ENCODE measurements at regions of chr11 and their contacts with region 1.

Region 1: DNA sequence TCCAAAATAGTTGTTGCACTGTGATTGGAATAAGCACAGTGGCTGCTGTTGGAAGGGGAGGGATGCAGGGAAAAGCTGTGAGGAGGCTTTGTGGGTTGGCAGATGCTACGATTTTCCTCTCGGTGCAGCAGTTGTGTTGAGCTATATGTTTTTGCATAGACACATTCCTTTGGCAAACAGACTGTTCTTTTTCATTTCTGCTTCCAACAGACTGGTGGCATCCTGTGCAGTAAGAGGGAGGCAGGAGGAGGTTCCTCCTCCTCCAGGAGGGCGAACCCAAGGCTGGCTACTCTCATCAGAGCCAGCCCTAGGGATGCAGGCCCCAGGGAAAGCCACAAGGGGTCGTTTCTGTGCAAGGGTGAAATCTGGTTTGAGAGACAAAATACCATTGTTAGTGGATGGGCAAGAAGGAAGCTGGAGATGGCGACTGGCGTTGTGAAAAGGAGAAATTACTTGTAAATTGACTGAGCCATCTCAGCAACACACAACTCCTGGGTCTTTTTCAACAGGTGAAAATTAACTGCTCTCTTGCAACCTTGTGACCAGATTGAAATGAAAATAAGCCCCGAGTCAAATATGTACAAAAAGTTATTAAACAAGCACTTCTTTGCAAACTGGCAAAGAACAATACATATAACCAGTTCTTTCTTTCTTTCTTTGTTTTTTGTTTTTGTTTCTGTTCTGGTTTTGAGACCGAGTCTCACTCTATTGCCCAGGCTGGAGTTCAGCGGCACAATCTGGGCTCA is 26.5 kb upstream of the UBASH3B start:
- DNase-seq: peak; percentile 40 to 81 (median 64)
- ATAC-seq: peak; percentile 80
- H3K4me3 ChIP-seq: no peak overlapping the region
- H3K4me3 Mint-ChIP-seq: no peak overlapping the region
- H3K27ac ChIP-seq: no peak overlapping the region
- H3K27ac Mint-ChIP-seq: no peak overlapping the region
- H3K4me1 ChIP-seq: no peaks in the 10 kb centered on the region
- H3K4me1 Mint-ChIP-seq: peaks cover 14% of the 10 kb centered on the region
- H3K27me3 ChIP-seq: no peaks in the 10 kb centered on the region
- H3K27me3 Mint-ChIP-seq: no peaks in the 10 kb centered on the region
- CTCF ChIP-seq: peak; percentile 65

Region 2: GRCh38 chr11:122439911-122440810 is 188.8 kb before region 1 on chr11:
- CTCF ChIA-PET with region 1: no interaction called
- POLR2A ChIA-PET with region 1: no interaction called
- intact Hi-C with region 1: no loop called
- DNase-seq: no peak
- ATAC-seq: no peak
- H3K4me3 ChIP-seq: no peak overlapping the region
- H3K4me3 Mint-ChIP-seq: no peak overlapping the region
- H3K27ac ChIP-seq: no peak overlapping the region
- H3K27ac Mint-ChIP-seq: no peak overlapping the region
- H3K4me1 ChIP-seq: no peaks in the 10 kb centered on the region
- H3K4me1 Mint-ChIP-seq: peaks cover 10% of the 10 kb centered on the region
- H3K27me3 ChIP-seq: peaks cover 13 to 25% of the 10 kb centered on the region in 2 experiments
- H3K27me3 Mint-ChIP-seq: peaks cover 16% of the 10 kb centered on the region
- CTCF ChIP-seq: no peak

Region 3: DNA sequence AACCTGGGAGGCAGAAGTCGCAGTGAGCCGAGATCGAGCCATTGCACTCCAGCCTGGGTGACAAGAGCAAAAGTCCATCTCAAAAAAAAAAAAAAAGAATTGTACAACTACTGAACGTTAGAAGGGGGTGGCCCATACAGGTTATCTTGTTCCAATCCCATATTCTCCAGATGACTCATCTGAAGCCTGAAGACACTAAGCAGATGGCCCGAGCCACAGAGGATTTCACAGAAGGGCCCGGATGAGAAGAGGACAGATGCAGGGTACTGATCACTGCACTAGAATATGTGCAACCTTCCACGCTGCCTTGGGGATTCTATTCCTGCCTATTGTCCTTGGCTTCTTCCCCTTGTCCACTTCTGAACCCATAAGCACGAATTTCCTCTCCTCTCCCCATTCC is 44.3 kb before region 1 on chr11:
- CTCF ChIA-PET with region 1: interaction called, 3 read pairs
- POLR2A ChIA-PET with region 1: interaction called, 3 read pairs
- intact Hi-C with region 1: loop called in 1 of 2 experiments (anchors 5 kb)
- DNase-seq: no peak
- ATAC-seq: no peak
- H3K4me3 ChIP-seq: no peak overlapping the region
- H3K4me3 Mint-ChIP-seq: no peak overlapping the region
- H3K27ac ChIP-seq: no peak overlapping the region
- H3K27ac Mint-ChIP-seq: no peak overlapping the region
- H3K4me1 ChIP-seq: peaks cover 8% of the 10 kb centered on the region
- H3K4me1 Mint-ChIP-seq: peaks cover 7% of the 10 kb centered on the region
- H3K27me3 ChIP-seq: peaks cover 4 to 6% of the 10 kb centered on the region in 2 experiments
- H3K27me3 Mint-ChIP-seq: no peaks in the 10 kb centered on the region
- CTCF ChIP-seq: no peak

Region 4: DNA sequence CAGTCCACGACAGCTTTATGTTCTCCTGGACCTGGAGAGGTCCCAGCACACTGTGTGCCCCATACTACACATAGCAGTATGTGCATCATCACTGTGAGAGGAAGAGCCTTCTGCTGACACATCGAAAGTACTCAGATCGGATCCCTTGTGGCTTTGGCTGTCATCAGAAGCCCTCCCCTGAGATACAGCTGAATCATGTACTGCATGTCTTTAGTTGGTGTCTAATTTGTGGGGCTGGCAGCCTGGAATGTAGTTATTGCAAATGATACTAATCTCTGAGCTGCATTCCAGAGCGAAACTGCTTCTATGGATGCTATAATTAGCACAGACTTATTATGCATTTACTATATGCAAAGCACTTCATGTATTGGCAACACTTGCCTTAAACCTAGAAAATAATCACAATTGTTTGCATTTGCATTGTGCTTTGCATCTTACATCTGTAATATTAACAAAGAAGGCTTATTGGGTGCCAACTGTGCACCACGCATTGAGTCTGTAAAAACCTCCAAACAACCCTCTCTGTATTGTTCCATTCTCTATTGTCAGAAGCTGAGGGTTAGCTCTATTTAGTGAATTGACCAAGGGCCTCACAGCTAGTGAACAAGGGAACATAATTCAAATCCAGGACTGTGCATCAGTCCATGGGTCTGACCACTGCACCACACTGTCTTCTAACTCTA is 120.2 kb after region 1 on chr11:
- CTCF ChIA-PET with region 1: interaction called, 12 read pairs
- POLR2A ChIA-PET with region 1: no interaction called
- intact Hi-C with region 1: loop called (anchors 1 kb)
- DNase-seq: peak in 13 of 14 experiments; percentile 11 to 80 (median 37)
- ATAC-seq: peak; percentile 42
- H3K4me3 ChIP-seq: no peak overlapping the region
- H3K4me3 Mint-ChIP-seq: no peak overlapping the region
- H3K27ac ChIP-seq: no peak overlapping the region
- H3K27ac Mint-ChIP-seq: no peak overlapping the region
- H3K4me1 ChIP-seq: peaks cover 68% of the 10 kb centered on the region
- H3K4me1 Mint-ChIP-seq: peaks cover 41% of the 10 kb centered on the region
- H3K27me3 ChIP-seq: no peaks in the 10 kb centered on the region
- H3K27me3 Mint-ChIP-seq: no peaks in the 10 kb centered on the region
- CTCF ChIP-seq: no peak

Region 5: GRCh38 chr11:123152956-123153355 is 524.0 kb after region 1 on chr11:
- CTCF ChIA-PET with region 1: no interaction called
- POLR2A ChIA-PET with region 1: no interaction called
- intact Hi-C with region 1: no loop called
- DNase-seq: no peak
- ATAC-seq: no peak
- H3K4me3 ChIP-seq: no peak overlapping the region
- H3K4me3 Mint-ChIP-seq: no peak overlapping the region
- H3K27ac ChIP-seq: no peak overlapping the region
- H3K27ac Mint-ChIP-seq: no peak overlapping the region
- H3K4me1 ChIP-seq: no peaks in the 10 kb centered on the region
- H3K4me1 Mint-ChIP-seq: no peaks in the 10 kb centered on the region
- H3K27me3 ChIP-seq: peaks cover 0 to 3% of the 10 kb centered on the region in 2 experiments
- H3K27me3 Mint-ChIP-seq: no peaks in the 10 kb centered on the region
- CTCF ChIP-seq: no peak

Measured in CD4-positive, alpha-beta T cell (primary cell).